ENCODE measurements at regions of chr18 and their contacts with region 1.

Region 1: GRCh38 chr18:48675352-48675761 is 136.5 kb downstream of the CTIF start:
- DNase-seq: peak; percentile 87

Region 2: DNA sequence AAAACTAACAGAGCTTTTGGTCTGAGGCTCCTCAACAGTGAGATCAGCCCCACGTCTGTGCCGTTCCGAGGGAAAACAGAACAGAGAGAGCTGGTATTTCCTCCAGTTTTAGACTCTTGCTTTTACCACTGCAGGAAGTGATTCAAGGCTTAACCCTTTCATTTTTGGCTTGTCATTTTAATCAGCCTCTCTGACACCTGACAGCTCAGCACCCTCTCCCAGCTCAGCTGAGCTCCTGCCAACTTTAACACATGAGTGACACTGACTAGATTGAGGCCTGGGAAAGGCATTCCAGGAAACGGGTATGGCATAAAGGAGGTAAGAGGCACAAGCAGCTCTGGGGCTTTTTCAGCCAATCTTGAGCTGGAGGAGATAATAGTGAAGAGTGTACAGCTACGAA is 1184.5 kb before region 1 on chr18:
- in situ Hi-C with region 1: no loop called
- DNase-seq: no peak

Region 3: DNA sequence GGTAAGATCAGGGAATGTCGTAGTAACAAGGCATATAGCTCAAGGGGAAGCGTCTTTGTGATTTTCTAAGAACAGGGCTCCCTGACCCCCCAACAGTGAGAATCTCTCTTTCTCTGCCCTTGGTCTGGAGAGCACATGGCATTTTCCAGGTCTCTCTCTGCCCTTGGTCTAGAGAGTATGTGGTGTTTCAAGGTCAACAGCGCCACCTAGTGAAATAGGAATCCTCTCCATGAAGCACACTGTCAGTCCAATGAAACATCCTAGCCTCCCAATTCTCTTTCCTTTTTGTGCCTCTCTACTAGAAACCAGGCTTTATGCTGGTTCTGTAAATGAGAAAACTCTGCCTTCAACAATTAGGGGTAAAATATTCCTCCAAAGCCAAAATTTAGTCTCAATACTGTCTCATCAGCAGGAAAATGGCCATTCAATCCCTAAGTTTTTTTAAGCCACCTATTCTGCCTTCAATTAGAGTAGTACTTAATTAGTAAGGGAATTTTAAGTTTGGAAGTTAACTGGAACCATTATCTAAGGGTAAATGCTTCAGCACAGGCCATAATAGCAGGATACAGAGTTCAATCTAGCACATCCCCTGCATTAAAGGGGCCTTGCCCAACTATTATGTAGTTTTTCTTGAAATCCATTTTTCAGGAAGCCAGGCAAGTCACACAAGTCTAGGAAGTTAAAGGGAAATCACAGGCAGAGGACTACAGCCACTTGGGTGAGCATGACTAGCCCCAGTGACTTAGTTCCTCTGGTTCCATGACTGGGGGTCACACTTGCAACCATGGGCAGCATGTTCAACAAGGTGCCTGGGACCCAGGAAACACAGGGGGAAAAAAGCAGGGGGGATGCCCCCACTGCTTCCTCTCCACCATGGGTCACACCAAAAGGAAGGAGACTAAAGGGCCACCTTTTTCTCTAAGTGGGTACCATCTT is 772.7 kb after region 1 on chr18:
- in situ Hi-C with region 1: loop called (anchors 25 kb)
- DNase-seq: peak; percentile 86